ENCODE measurements at regions of chr20 and their contacts with region 1.

Region 1: DNA sequence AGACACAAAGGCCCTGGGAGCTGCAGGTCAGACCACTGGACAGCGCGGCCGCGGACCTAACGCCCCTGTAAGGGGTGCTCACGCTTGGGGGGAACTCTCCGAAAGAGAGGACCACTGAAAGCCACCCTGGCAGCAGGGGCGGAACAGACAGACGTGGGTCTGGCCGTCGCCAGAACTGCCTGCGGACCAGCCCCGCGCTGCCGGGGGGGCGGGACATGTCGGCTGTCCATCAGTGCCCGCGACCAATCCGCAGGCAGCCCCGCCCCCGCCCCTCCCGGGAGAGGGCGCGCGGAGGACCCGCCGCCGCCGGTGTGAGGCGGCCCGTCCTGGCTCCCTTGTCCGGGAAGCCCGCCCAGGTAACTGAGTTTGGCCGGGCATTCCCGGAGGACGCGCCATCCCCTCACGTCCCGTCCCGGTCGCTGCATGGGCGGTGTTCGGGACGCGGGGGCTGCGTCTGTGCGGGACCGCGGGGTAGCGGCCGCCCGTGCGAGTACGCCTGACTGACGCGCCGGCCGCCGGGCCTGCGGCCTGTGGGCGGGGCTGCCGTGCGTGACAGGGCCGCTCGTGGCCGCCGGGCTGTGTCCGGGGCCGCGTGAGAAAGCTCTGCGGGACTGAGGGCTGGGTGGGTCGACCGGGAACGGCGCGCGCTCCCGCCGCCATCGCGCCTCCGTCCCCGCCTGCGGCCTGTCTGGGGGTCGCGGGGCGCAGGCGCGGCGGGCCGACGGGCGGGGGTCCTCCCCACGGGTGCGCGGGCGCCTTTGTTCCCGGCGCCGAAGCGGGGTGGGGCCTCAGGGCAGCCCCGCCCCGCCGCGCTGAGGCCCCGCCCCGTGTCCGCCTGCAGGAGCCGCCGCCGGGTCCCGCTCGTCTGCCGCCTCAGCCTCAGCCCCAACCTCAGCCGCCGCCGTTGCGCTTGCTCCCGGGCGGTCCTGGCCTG is at the start of gene PLCG1:
- DNase-seq: peak; percentile 83 to 91
- ATAC-seq: peak; percentile 77 to 86
- H3K4me3 ChIP-seq: peak within 1 kb of the TSS; percentile 89
- H3K27ac ChIP-seq: peak within 1 kb of the TSS; percentile 86 to 91
- H3K4me1 ChIP-seq: peaks cover 7% of the 10 kb centered on the region
- CTCF ChIP-seq: no peak
- EP300 ChIP-seq: no peak
- POLR2A ChIP-seq: peak; percentile 57
- RAD21 ChIP-seq: no peak
- polyA plus RNA-seq, gene PLCG1: 22.0 and 37.1 TPM in 2 replicates

Region 2: DNA sequence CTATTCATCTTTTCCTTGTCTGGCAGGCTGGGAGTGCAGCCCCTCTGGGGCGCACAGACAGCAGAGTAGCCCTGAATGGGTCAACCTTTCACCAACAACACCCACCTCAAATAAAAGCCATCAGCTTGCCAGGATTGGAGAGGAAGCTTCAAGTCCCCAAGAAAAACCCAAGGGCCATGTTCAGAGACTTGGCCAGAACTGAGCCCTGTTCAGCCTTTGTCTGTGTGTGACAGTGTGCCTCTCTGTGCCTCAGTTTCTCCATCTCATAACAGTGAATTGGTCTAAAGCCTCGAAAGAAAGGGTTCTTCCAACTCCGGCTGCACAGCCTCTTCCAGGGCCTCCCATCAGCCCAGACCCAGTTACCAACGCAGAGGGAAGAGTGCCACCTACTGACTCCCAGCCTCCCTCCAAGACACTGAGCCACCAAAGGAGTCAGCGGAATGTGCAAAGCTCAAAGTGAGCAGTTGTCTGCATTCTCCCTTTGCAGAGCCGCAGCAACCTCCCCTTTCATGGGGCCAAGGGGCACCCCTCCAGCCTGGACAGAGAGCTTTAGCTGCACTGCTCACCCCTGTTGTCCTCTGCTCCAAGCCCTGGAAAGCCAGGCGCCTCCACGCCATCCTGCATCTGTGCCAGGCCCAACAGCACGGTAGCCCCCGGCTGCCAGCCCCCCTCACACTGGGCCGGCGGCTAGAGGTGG is 191.0 kb before region 1 on chr20:
- CTCF ChIA-PET with region 1: no interaction called
- POLR2A ChIA-PET with region 1: no interaction called
- DNase-seq: peak; percentile 40 to 59
- ATAC-seq: peak; percentile 93 to 97
- H3K4me3 ChIP-seq: no peak overlapping the region
- H3K27ac ChIP-seq: no peak overlapping the region
- H3K4me1 ChIP-seq: no peaks in the 10 kb centered on the region
- CTCF ChIP-seq: peak; percentile 42
- EP300 ChIP-seq: no peak
- POLR2A ChIP-seq: no peak
- RAD21 ChIP-seq: peak; percentile 51 to 77

Region 3: GRCh38 chr20:40970201-40970600 is 166.7 kb before region 1 on chr20:
- CTCF ChIA-PET with region 1: interaction called, 11 read pairs
- POLR2A ChIA-PET with region 1: no interaction called
- DNase-seq: no peak
- ATAC-seq: peak; percentile 16 to 38; a peak in 2 of 6 replicates
- H3K4me3 ChIP-seq: no peak overlapping the region
- H3K27ac ChIP-seq: no peak overlapping the region
- H3K4me1 ChIP-seq: no peaks in the 10 kb centered on the region
- CTCF ChIP-seq: no peak
- EP300 ChIP-seq: no peak
- POLR2A ChIP-seq: no peak
- RAD21 ChIP-seq: peak in 1 of 2 experiments; percentile 6; a peak in 1 of 5 replicates

Region 4: DNA sequence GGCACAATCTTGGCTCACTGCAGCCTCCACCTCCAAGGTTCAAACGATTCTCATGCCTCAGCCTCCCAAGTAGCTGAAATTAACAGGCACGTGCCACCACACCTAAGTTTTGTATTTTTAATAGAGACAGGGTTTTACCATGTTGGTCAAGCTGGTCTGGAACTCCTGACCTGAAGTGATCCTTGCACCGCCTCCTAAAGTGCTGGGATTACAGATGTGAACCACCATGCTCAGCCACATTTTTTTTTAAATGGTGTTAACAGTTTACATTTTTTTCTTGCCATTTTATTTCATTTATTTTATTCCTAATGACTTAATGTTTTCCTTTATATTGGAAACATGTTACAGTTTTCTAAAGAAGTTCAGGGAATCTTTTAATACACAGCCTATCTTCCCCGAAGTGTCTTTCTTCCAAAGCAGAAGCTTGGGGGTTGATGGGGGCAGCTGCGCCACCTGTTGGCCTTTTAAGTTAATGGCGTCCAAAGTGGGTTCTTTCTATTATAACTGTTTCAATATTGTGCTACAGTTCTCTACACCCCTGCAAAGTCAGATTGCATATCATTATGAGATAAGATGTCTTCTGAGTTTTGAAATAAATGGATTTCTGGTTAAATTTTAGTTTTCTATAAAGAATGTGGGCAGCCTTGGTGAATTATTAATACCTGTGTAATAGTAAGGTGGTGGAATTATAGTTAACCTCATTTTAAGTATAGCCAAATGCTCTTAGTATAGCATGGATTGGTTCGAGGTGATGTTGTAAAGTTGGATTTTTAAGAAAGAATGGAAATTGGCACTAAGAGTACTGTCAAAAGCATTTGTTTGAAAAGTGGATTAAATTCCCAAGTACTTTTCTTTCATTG is 41.6 kb before region 1 on chr20:
- CTCF ChIA-PET with region 1: interaction called, 10 read pairs
- POLR2A ChIA-PET with region 1: no interaction called
- DNase-seq: peak; percentile 53 to 64
- ATAC-seq: peak; percentile 86 to 87
- H3K4me3 ChIP-seq: no peak overlapping the region
- H3K27ac ChIP-seq: no peak overlapping the region
- H3K4me1 ChIP-seq: no peaks in the 10 kb centered on the region
- CTCF ChIP-seq: peak; percentile 91
- EP300 ChIP-seq: no peak
- POLR2A ChIP-seq: no peak
- RAD21 ChIP-seq: peak; percentile 79 to 81

Region 5: DNA sequence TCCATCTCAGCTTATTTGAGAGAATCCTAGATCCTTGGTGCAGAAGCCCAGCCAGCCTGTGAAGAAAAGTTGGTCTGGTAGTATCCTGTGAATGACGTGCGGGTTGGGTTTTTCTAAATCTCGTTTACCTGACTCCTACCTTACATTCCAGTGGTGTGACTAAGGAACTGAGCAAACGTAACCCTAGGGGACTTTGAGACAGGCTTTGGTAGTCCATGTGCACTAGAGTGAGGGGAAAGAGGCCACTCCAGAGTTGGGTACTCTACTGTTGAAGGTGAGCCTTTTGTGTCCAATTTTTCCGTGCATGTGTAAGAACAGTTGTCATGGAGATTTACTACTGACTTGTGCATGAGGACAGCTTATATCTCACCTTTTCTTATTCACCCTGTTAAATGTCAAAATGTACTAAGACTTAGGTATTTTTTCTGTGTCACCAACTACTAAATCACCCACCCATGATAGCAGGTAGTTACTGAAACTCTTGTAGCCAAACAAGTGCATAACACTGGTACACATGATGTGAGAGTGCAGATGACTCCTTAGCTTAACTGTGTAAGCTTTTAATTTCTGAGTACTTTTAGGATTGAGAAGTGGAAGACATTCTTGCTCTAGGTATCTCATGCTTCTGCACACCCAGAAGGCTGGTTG is 25.9 kb before region 1 on chr20:
- CTCF ChIA-PET with region 1: interaction called, 54 read pairs
- POLR2A ChIA-PET with region 1: no interaction called
- DNase-seq: no peak
- ATAC-seq: no peak; a peak in 1 of 6 replicates
- H3K4me3 ChIP-seq: no peak overlapping the region
- H3K27ac ChIP-seq: no peak overlapping the region
- H3K4me1 ChIP-seq: peaks cover 10% of the 10 kb centered on the region; the same call in 1 of the 3 replicates
- CTCF ChIP-seq: no peak
- EP300 ChIP-seq: no peak
- POLR2A ChIP-seq: no peak
- RAD21 ChIP-seq: no peak

Region 6: GRCh38 chr20:41119546-41120235 is 17.3 kb before region 1 on chr20:
- CTCF ChIA-PET with region 1: interaction called, 54 read pairs
- POLR2A ChIA-PET with region 1: no interaction called
- DNase-seq: no peak
- ATAC-seq: 0 out of 6 replicates have a peak, but pooled peaks of 1 of the 2 experiments have one; percentile 26
- H3K4me3 ChIP-seq: no peak overlapping the region
- H3K27ac ChIP-seq: no peak overlapping the region
- H3K4me1 ChIP-seq: peaks cover 16% of the 10 kb centered on the region; the same call in 2 of the 3 replicates
- CTCF ChIP-seq: no peak
- EP300 ChIP-seq: no peak
- POLR2A ChIP-seq: no peak
- RAD21 ChIP-seq: no peak

Region 7: DNA sequence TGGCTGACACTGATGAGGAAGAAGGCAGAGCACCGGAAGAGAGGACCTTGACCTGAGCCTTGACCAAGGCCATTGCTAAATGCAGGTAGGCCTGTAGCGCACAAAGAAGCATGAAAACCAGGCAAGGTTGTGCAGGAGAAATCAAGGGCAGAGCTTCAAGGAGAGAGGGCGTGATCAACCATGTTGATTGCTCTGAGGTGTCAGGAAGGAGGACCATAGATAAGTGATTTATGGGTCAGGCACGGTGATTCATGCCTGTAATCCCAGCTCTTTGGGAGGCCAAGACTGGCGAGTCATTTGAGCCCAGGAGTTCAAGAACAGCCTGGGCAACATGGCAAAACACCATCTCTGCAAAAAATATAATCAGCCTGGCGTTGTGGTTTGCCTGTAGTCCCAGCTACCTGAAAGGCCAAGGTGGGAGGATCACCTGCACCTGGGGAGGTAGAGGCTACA is 12.8 kb after region 1 on chr20:
- CTCF ChIA-PET with region 1: interaction called, 22 read pairs
- POLR2A ChIA-PET with region 1: no interaction called
- DNase-seq: peak in 1 of 2 experiments; percentile 32
- ATAC-seq: peak in 1 of 2 experiments; percentile 63; a peak in 3 of 6 replicates
- H3K4me3 ChIP-seq: no peak overlapping the region
- H3K27ac ChIP-seq: no peak overlapping the region
- H3K4me1 ChIP-seq: 0 out of 3 replicates have a peak, but pooled peaks cover 8% of the 10 kb centered on the region
- CTCF ChIP-seq: no peak
- EP300 ChIP-seq: no peak
- POLR2A ChIP-seq: no peak
- RAD21 ChIP-seq: no peak

Region 8: DNA sequence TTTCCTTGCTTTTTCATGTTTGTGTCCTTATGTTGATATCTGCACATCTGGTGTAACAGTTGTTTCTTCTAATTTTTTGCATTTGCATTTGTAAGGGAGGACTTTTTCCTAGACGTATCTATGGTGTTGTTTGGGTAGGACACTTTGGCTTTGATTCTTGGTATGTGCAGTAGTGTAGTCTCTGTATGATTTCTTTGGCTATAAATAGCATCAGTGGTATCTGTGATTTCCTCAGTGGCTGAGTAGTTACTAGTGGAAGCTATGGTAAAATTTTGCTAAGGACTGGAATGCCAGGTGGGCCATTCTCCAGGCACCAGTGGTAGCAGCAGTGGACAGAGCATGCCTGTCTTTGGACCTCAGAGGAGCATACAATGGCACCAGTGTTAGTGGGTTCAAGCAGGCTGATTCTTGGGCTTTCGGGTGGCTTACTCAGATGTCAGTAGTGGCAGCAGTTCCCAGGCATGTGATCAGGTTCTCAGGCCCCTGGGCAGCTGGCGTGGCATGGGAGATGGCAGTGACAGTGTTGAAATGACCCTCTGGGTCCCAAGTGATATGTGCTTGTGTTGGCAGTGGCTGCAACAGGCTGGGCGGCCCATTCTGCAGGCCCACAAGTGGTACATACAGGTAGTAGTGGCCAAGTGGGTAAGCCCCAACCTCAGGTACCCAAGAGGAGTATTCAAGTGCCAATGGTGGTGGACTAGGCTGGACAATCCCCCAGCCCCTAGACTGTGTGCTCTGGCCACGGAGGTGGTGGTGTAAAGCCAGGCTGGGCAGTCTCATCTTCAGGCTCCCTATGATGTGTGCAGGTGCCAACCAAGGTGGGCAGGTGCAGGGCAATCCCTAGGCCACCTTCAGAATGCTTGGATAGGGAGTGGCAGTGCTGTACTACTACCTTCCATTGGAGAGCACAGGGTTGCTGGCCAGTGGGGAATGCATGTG is 54.9 kb after region 1 on chr20:
- CTCF ChIA-PET with region 1: no interaction called
- POLR2A ChIA-PET with region 1: no interaction called
- DNase-seq: no peak
- ATAC-seq: no peak
- H3K4me3 ChIP-seq: no peak overlapping the region
- H3K27ac ChIP-seq: no peak overlapping the region
- H3K4me1 ChIP-seq: no peaks in the 10 kb centered on the region
- CTCF ChIP-seq: no peak
- EP300 ChIP-seq: no peak
- POLR2A ChIP-seq: no peak
- RAD21 ChIP-seq: no peak

Region 9: DNA sequence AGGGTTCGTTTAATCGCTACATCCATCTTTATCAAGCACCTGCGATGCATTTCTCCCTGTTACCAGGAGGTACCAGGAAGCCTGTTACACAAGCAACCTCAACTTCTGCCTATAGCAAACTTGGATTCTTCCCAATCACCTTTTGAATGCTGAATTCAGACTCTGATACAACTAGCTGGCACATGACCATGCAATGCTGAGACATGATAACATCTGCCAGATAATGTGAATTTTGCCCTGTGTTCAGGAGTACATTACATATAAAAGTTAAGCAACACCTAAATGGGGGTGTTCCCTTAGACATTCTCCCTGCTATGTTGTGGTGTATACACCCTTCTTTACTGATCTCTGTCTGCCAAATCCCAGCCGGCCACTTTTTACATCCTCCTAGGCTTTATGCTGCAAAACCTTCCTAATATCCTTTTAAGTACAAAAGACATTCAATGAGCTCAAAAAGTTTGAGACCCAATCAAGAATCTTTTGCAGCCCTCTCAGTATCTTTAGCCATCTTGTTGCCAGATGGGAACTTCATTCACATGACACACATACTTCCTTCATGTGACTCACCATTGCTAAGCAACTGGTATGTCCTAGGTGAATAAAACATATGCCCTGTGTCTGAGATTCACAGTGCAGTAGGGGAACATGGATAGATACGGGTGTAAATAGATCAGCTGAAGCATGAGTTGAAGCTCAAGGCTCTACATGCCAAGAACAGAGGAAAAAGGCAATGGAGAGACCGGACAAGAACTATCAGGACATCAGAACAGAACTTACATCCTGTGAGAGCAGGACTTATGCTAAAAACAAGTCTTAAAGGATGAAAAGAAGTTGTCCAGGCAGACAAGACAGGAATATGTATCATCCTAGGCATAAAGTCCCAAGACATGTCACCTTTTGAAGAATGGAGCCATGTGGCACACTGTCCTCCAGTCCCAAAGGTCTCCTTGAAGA is 96.3 kb after region 1 on chr20:
- CTCF ChIA-PET with region 1: interaction called, 13 read pairs
- POLR2A ChIA-PET with region 1: no interaction called
- DNase-seq: peak; percentile 10 to 31
- ATAC-seq: peak; percentile 71 to 86; a peak in 5 of 6 replicates
- H3K4me3 ChIP-seq: peak overlapping the region; percentile 42
- H3K27ac ChIP-seq: peak overlapping the region; percentile 56 to 64; a peak in 3 of 6 replicates
- H3K4me1 ChIP-seq: peaks cover 12% of the 10 kb centered on the region
- CTCF ChIP-seq: no peak
- EP300 ChIP-seq: no peak
- POLR2A ChIP-seq: no peak
- RAD21 ChIP-seq: no peak

Region 10: DNA sequence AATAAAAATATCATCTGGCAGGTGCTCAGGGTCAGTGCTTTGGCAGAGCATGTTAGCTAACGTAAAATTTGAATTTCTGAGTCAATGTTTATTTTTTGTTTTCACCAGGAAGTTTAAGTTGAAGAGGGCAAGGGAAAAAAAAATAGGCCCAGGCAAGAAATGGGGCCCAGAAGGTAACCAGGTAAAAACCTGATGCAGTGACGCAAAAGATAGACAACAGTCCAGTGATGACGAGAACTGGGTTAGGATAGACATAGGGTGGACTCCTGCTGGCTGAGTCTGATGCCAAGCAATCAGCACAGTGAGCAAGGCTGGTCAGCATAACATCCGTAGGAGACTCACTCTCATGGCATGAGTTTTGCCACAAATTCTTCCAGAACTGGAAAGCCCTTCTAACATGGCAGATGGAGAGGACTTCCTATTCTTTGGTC is 138.4 kb after region 1 on chr20:
- CTCF ChIA-PET with region 1: no interaction called
- POLR2A ChIA-PET with region 1: no interaction called
- DNase-seq: no peak
- ATAC-seq: no peak
- H3K4me3 ChIP-seq: no peak overlapping the region
- H3K27ac ChIP-seq: no peak overlapping the region
- H3K4me1 ChIP-seq: 0 out of 3 replicates have a peak, but pooled peaks cover 7% of the 10 kb centered on the region
- CTCF ChIP-seq: no peak
- EP300 ChIP-seq: no peak
- POLR2A ChIP-seq: no peak
- RAD21 ChIP-seq: no peak